GM12878 (cell line): ENCODE measurements at regions of chr11 and their contacts with region 1.

Region 1: GRCh38 chr11:46006418-46007070 is 84.1 kb downstream of the LARGE2 start:
- DNase-seq: peak; percentile 37
- ATAC-seq: peak; percentile 96
- H3K4me3 ChIP-seq: no peak overlapping the region
- H3K27ac ChIP-seq: no peak overlapping the region
- H3K4me1 ChIP-seq: no peaks in the 10 kb centered on the region
- H3K27me3 ChIP-seq: no peaks in the 10 kb centered on the region
- CTCF ChIP-seq: peak; percentile 71 to 80 (median 72)
- EP300 ChIP-seq: no peak
- POLR2A ChIP-seq: no peak
- RAD21 ChIP-seq: peak; percentile 81

Region 2: GRCh38 chr11:45852708-45853101 is 153.8 kb before region 1 on chr11:
- CTCF ChIA-PET with region 1: interaction called, 11 read pairs
- POLR2A ChIA-PET with region 1: no interaction called
- RAD21 ChIA-PET with region 1: interaction called, 4 read pairs
- SMC1A ChIA-PET with region 1: interaction called, 5 read pairs
- in situ Hi-C with region 1: no loop called
- intact Hi-C with region 1: loop called (anchors 10 kb)
- DNase-seq: no peak
- ATAC-seq: peak; percentile 71
- H3K4me3 ChIP-seq: peak overlapping the region; percentile 61; the same call in 1 of the 2 replicates
- H3K27ac ChIP-seq: peak overlapping the region; percentile 32; the same call in 1 of the 2 replicates
- H3K4me1 ChIP-seq: peaks cover 16% of the 10 kb centered on the region
- H3K27me3 ChIP-seq: no peaks in the 10 kb centered on the region
- CTCF ChIP-seq: peak; percentile 32 to 67 (median 39); a peak in 4 of 6 replicates
- EP300 ChIP-seq: no peak
- POLR2A ChIP-seq: no peak
- RAD21 ChIP-seq: peak; percentile 46

Region 3: GRCh38 chr11:45917623-45918330 is 88.8 kb before region 1 on chr11 and contains the start of gene PEX16:
- CTCF ChIA-PET with region 1: interaction called, 5 read pairs
- POLR2A ChIA-PET with region 1: no interaction called
- RAD21 ChIA-PET with region 1: interaction called, 10 read pairs
- SMC1A ChIA-PET with region 1: interaction called, 3 read pairs
- in situ Hi-C with region 1: no loop called
- intact Hi-C with region 1: no loop called
- DNase-seq: peak; percentile 94
- ATAC-seq: peak; percentile 92
- H3K4me3 ChIP-seq: peak within 1 kb of the TSS; percentile 99
- H3K27ac ChIP-seq: peak within 1 kb of the TSS; percentile 92
- H3K4me1 ChIP-seq: peaks cover 18% of the 10 kb centered on the region
- H3K27me3 ChIP-seq: peaks cover 2 to 4% of the 10 kb centered on the region in 2 experiments; a peak in 3 of 4 replicates
- CTCF ChIP-seq: no peak
- EP300 ChIP-seq: no peak; a peak in 1 of 4 replicates
- POLR2A ChIP-seq: peak; percentile 99
- RAD21 ChIP-seq: no peak
- polyA plus RNA-seq, gene PEX16: 1.4 to 5.6 TPM

Region 4: DNA sequence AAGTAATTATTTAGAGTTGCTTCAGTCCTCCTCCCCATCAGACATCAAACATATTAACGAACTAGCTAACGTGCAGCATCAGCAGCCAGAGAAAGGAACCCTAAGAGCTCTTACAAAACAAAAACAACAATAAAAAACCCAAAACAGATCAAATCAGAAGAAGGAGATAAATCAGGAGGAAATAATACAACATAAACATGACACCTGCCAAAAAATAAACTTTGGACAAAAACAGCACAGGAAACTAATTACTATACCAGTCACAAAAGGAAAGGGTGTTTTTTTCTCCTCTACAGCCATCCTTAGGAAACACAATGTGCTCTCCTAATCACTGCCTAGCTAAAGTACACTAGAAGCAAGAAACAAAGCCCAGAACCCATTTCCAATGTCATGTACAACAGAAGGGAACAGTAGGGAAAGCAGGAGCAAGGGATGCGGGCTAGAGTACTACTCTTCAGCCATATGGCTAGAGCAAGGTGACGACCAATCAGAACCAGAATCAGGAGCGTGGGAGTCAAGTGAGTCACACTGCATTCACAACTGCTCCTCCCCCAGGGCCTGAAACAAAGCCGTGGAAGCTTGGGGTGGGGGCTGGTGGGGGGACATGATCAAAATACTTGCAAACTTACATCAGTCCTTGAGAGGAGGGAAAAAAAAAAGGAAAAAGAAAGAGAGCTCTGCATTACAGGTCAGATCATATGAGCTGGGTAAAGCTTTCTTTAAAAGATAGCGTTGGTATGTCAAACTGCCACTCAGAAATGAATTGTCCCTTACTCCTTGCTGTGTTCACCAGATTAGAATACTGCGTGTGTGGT is 23.7 kb before region 1 on chr11:
- CTCF ChIA-PET with region 1: interaction called, 15 read pairs
- POLR2A ChIA-PET with region 1: interaction called, 4 read pairs
- RAD21 ChIA-PET with region 1: interaction called, 6 read pairs
- SMC1A ChIA-PET with region 1: interaction called, 5 read pairs
- in situ Hi-C with region 1: no loop called
- intact Hi-C with region 1: no loop called
- DNase-seq: no peak
- ATAC-seq: no peak
- H3K4me3 ChIP-seq: no peak overlapping the region
- H3K27ac ChIP-seq: no peak overlapping the region
- H3K4me1 ChIP-seq: no peaks in the 10 kb centered on the region
- H3K27me3 ChIP-seq: no peaks in the 10 kb centered on the region
- CTCF ChIP-seq: no peak
- EP300 ChIP-seq: no peak
- POLR2A ChIP-seq: no peak
- RAD21 ChIP-seq: no peak

Region 5: GRCh38 chr11:46017341-46017740 is 10.8 kb after region 1 on chr11:
- CTCF ChIA-PET with region 1: interaction called, 27 read pairs
- POLR2A ChIA-PET with region 1: no interaction called
- RAD21 ChIA-PET with region 1: interaction called, 5 read pairs
- SMC1A ChIA-PET with region 1: interaction called, 7 read pairs
- in situ Hi-C with region 1: no loop called
- intact Hi-C with region 1: no loop called
- DNase-seq: no peak
- ATAC-seq: no peak
- H3K4me3 ChIP-seq: no peak overlapping the region
- H3K27ac ChIP-seq: no peak overlapping the region
- H3K4me1 ChIP-seq: no peaks in the 10 kb centered on the region
- H3K27me3 ChIP-seq: no peaks in the 10 kb centered on the region
- CTCF ChIP-seq: no peak
- EP300 ChIP-seq: no peak
- POLR2A ChIP-seq: no peak
- RAD21 ChIP-seq: no peak